ENCODE measurements at regions of chr2 and their contacts with region 1.

Region 1: DNA sequence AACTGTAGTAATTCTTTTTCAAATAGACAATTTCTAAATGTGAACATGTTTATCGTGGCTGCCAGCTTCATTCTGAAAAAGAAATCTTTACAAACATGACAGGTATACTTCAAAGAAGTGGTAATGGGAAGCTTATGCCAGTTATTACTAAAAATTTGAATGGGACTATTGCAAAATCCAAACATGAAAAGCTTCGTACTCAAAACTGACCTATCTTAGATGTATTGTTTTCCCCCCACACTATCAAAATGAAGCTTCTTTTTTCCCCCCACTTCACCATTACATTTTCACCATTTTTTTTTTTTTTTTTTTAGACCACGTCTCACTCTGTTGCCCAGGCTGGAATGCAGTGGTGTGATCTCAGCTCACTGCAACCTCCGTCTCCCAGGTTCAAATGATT is 50.4 kb upstream of the SERTAD2 start:
- DNase-seq: no peak
- CTCF ChIP-seq: no peak

Region 2: DNA sequence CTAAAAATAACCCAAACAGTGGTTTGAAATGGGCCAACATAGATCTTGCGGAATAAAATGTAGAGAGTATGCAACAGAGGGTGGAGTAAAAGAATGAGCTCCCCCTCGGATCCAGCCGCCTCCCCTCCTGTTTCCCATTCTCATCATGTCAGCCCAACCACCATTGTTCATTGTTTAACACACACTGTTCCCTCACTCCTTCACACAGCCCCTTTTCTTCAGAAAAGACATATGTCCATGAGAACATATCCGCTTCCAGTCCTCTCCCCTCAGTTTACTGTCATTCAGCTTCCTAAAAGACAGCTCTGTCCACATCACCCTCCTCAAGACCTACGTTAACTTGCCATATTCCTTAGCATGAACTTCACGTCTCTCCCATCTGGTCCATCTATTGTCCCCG is 12.4 kb after region 1 on chr2:
- CTCF ChIA-PET with region 1: interaction called, 12 read pairs
- POLR2A ChIA-PET with region 1: no interaction called
- DNase-seq: no peak
- CTCF ChIP-seq: no peak

Region 3: DNA sequence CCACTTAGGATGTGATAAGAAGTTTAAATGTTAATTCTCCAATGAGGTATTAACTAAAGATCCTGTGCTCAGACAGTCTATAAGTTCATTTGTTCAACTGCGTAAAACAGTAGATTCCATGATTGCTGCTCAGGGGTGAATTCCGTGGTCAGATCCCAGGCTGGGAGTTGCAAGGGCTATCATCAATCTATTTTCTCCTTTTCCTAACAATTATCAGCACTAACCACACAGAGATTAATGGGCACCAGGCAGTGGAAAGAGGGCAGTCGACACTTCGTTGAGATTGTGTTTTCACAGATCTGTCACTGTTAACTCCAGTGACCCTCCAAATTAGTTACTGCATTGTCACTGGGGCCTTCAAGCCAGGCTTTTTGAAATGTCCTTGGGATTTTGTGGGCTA is 882.4 kb after region 1 on chr2:
- CTCF ChIA-PET with region 1: no interaction called
- POLR2A ChIA-PET with region 1: no interaction called
- DNase-seq: no peak
- CTCF ChIP-seq: no peak